MCF 10A (cell line): ENCODE measurements at regions of chr4 and their contacts with region 1.

Region 1: GRCh38 chr4:181143250-181143854 is 1099.8 kb upstream of the TENM3 start:
- DNase-seq: peak; percentile 83
- H3K4me3 Mint-ChIP-seq: no peak overlapping the region
- H3K27ac Mint-ChIP-seq: no peak overlapping the region
- H3K4me1 Mint-ChIP-seq: no peaks in the 10 kb centered on the region
- H3K27me3 Mint-ChIP-seq: no peaks in the 10 kb centered on the region
- CTCF ChIP-seq: peak; percentile 88

Region 2: DNA sequence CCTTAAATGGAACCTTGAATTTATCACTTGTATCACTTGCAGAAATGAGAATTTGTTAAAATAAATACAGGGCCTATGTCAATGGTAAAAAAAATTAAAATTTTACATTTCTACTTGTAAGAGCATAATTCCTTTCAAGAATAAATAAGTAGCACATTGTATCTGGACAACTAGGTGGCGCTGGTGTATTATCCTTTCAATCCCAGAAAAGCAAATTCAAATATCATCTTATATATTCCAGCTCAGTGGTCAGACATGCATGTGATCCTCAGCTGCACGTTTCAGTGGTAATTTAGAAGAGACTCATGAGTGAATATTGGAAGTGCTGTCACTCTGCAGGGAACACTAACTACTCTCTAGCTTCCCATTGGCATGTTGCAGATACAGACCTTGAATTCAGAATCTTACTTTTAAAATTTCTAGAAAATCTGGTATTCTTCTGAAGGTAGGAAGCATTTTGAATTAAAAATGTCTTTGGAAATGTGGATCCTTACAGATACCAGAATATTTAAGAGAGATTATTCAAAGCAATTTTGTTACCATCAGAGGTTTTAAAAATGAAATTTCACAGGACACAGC is 314.8 kb before region 1 on chr4:
- CTCF ChIA-PET with region 1: interaction called, 10 read pairs
- POLR2A ChIA-PET with region 1: interaction called, 4 read pairs
- intact Hi-C with region 1: loop called (anchors 2 kb)
- DNase-seq: peak; percentile 71
- H3K4me3 Mint-ChIP-seq: no peak overlapping the region
- H3K27ac Mint-ChIP-seq: no peak overlapping the region
- H3K4me1 Mint-ChIP-seq: peaks cover 11% of the 10 kb centered on the region
- H3K27me3 Mint-ChIP-seq: no peaks in the 10 kb centered on the region
- CTCF ChIP-seq: peak; percentile 63

Region 3: GRCh38 chr4:181213551-181213950 is 70.2 kb after region 1 on chr4:
- CTCF ChIA-PET with region 1: no interaction called
- POLR2A ChIA-PET with region 1: no interaction called
- intact Hi-C with region 1: no loop called
- DNase-seq: no peak
- H3K4me3 Mint-ChIP-seq: no peak overlapping the region
- H3K27ac Mint-ChIP-seq: no peak overlapping the region
- H3K4me1 Mint-ChIP-seq: no peaks in the 10 kb centered on the region
- H3K27me3 Mint-ChIP-seq: no peaks in the 10 kb centered on the region
- CTCF ChIP-seq: no peak

Region 4: GRCh38 chr4:181517491-181517890 is 374.1 kb after region 1 on chr4:
- CTCF ChIA-PET with region 1: interaction called, 21 read pairs
- POLR2A ChIA-PET with region 1: no interaction called
- intact Hi-C with region 1: no loop called
- DNase-seq: no peak
- H3K4me3 Mint-ChIP-seq: no peak overlapping the region
- H3K27ac Mint-ChIP-seq: no peak overlapping the region
- H3K4me1 Mint-ChIP-seq: no peaks in the 10 kb centered on the region
- H3K27me3 Mint-ChIP-seq: no peaks in the 10 kb centered on the region
- CTCF ChIP-seq: no peak

Region 5: GRCh38 chr4:181536811-181537434 is 393.6 kb after region 1 on chr4:
- CTCF ChIA-PET with region 1: interaction called, 121 read pairs
- POLR2A ChIA-PET with region 1: no interaction called
- intact Hi-C with region 1: no loop called
- DNase-seq: no peak
- H3K4me3 Mint-ChIP-seq: no peak overlapping the region
- H3K27ac Mint-ChIP-seq: no peak overlapping the region
- H3K4me1 Mint-ChIP-seq: peaks cover 7% of the 10 kb centered on the region
- H3K27me3 Mint-ChIP-seq: no peaks in the 10 kb centered on the region
- CTCF ChIP-seq: no peak

Region 6: GRCh38 chr4:182925298-182925738 is 1782.0 kb after region 1 on chr4:
- CTCF ChIA-PET with region 1: no interaction called
- POLR2A ChIA-PET with region 1: no interaction called
- intact Hi-C with region 1: loop called (anchors 5 kb)
- DNase-seq: peak; percentile 45
- H3K4me3 Mint-ChIP-seq: no peak overlapping the region
- H3K27ac Mint-ChIP-seq: no peak overlapping the region
- H3K4me1 Mint-ChIP-seq: no peaks in the 10 kb centered on the region
- H3K27me3 Mint-ChIP-seq: no peaks in the 10 kb centered on the region
- CTCF ChIP-seq: peak; percentile 34